PC-3 (cell line): ENCODE measurements at regions of chr15 and their contacts with region 1.

Region 1: DNA sequence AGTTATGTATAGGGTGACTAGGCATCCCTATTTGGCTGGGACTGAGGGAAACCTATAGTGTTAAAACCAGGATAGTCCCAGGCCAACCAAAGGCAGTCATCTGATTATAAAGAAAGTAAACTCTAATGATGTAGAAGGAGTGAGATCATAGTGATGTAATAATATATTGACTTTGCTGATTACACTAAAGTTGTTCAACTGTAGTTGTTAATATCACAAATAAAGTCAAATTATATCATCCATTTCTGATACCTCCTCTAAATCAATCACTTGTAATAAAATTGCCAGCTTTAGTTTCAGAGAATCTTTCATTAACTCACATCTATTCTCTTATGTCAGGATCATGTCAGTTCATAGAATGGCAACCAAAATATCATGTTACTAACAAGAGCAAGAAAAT is 98.6 kb downstream of the FOXB1 start:
- DNase-seq: no peak
- ATAC-seq: no peak
- H3K4me3 ChIP-seq: no peak overlapping the region
- H3K27ac ChIP-seq: no peak overlapping the region
- H3K4me1 ChIP-seq: peaks cover 13% of the 10 kb centered on the region
- H3K27me3 ChIP-seq: no peaks in the 10 kb centered on the region
- CTCF ChIP-seq: no peak

Region 2: GRCh38 chr15:60087561-60087960 is 15.2 kb before region 1 on chr15:
- CTCF ChIA-PET with region 1: interaction called, 3 read pairs
- POLR2A ChIA-PET with region 1: interaction called, 13 read pairs
- intact Hi-C with region 1: no loop called
- DNase-seq: peak; percentile 60
- ATAC-seq: peak; percentile 36
- H3K4me3 ChIP-seq: no peak overlapping the region
- H3K27ac ChIP-seq: 0 out of 2 replicates have a peak overlapping the region, but pooled peaks have one; percentile 16
- H3K4me1 ChIP-seq: peaks cover 62% of the 10 kb centered on the region
- H3K27me3 ChIP-seq: no peaks in the 10 kb centered on the region
- CTCF ChIP-seq: no peak

Region 3: GRCh38 chr15:60179786-60180391 is 77.1 kb after region 1 on chr15:
- CTCF ChIA-PET with region 1: no interaction called
- POLR2A ChIA-PET with region 1: no interaction called
- intact Hi-C with region 1: no loop called
- DNase-seq: peak; percentile 65
- ATAC-seq: peak; percentile 48; the same call in 1 of the 2 replicates
- H3K4me3 ChIP-seq: no peak overlapping the region
- H3K27ac ChIP-seq: no peak overlapping the region
- H3K4me1 ChIP-seq: no peaks in the 10 kb centered on the region
- H3K27me3 ChIP-seq: peaks cover 55% of the 10 kb centered on the region
- CTCF ChIP-seq: peak; percentile 83